HepG2 (cell line): ENCODE measurements at regions of chr20 and their contacts with region 1.

Region 1: DNA sequence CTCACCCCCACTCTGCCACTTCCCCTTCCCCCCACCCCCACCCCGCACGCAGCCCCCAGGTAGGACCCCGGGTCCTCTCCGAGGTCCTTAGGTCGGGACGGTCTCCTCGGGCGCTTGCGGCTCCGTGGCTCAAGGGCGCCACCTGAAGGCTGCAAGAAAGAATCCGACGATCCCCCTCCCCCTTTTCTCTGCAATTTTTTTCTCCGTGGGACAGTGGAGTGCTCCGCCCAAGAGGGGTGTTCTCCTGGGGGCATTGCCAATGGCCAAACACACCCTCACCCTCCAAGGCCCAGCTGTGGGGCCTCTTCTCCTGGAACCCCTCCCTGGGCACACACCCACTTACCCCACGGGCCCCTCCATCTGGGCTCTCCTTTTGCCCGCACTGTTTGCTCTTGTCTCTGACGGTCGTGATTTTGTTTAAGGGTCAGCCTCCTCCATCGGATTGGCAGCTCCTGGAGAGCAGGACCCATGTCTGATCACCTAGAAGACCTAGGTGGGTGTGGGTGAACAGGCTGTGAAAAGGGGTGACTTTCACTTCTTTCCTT is 1.1 kb upstream of the TMEM74B start:
- DNase-seq: peak; percentile 63
- ATAC-seq: peak; percentile 53
- H3K4me3 ChIP-seq: peak overlapping the region; percentile 56 to 75 (median 69)
- H3K27ac ChIP-seq: peak overlapping the region; percentile 1
- H3K4me1 ChIP-seq: peaks cover 60% of the 10 kb centered on the region
- H3K27me3 ChIP-seq: no peaks in the 10 kb centered on the region; a peak in 1 of 5 replicates
- CTCF ChIP-seq: peak; percentile 84
- EP300 ChIP-seq: no peak
- POLR2A ChIP-seq: no peak
- RAD21 ChIP-seq: peak; percentile 78

Region 2: DNA sequence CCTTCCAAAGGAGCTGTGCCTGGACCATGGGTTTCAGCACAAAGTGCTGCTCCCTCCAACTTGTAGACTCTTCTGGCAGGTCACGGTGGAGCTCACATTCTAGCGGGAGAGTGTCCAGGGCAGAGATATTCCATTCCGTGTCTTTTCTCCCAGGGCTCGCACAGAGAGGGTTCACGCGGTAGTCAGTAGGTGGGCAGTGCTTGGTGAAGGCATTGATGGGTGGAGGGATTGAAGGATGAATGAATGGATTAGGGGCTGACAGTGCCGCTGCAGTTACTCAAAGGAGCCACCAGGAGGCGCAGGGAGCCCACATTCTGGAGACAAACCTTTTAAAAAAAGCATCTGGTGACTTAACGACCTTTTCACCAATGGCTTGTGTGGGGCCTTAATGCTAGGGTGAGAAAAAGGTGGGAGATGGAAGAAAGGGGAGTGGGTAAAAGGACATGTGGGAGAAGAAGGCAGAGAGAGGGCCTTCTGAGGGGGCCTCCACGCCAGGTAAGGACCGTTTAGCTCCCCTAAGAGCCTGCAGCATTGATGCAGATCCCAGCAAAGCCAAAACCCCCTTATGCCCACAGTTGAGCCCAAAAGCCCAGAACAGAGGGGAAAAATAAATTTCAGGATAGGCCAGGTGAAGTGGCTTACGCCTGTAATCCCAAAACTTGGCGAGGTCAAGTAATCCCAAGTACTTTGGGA is 369.8 kb before region 1 on chr20:
- CTCF ChIA-PET with region 1: interaction called, 4 read pairs
- POLR2A ChIA-PET with region 1: no interaction called
- in situ Hi-C with region 1: loop called (anchors 10 kb)
- intact Hi-C with region 1: loop called (anchors 10 kb)
- DNase-seq: peak; percentile 70
- ATAC-seq: peak; percentile 68
- H3K4me3 ChIP-seq: no peak overlapping the region
- H3K27ac ChIP-seq: no peak overlapping the region
- H3K4me1 ChIP-seq: no peaks in the 10 kb centered on the region
- H3K27me3 ChIP-seq: no peaks in the 10 kb centered on the region
- CTCF ChIP-seq: peak; percentile 97
- EP300 ChIP-seq: no peak
- POLR2A ChIP-seq: no peak
- RAD21 ChIP-seq: peak; percentile 91

Region 3: DNA sequence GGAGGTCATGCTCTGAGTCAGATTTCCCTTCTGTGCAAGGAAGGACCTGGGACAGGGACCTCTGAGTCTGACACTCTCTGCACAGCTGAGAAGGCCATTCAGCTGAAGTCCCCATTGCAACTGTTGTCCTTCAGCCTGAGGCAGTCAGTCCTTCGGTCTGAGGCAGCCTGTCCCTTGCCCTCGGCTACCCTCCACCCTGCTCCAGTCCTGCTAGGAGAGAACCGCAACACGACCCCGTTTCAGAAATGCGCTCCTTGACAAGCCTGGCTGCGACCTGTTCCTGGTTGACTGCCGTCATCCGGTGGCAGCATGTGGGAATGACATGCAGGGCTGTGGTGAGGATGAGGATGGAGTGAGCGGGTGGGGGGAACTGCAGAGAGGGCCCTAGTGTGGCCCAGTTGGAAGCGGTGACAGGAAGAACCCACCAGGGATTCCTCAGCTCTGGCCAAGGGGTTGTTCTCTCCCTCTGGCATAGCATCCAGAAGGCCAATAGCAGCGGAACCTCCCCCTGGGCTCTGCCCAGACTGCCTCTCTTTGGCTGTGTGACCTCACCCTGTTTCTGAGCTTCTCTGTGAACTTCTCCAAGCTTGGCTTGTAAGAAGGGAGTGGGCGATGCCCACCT is 229.4 kb before region 1 on chr20:
- CTCF ChIA-PET with region 1: no interaction called
- POLR2A ChIA-PET with region 1: no interaction called
- in situ Hi-C with region 1: loop called (anchors 10 kb)
- intact Hi-C with region 1: no loop called
- DNase-seq: peak; percentile 74
- ATAC-seq: peak; percentile 87
- H3K4me3 ChIP-seq: no peak overlapping the region
- H3K27ac ChIP-seq: no peak overlapping the region
- H3K4me1 ChIP-seq: no peaks in the 10 kb centered on the region
- H3K27me3 ChIP-seq: peaks cover 12 to 39% of the 10 kb centered on the region in 2 experiments
- CTCF ChIP-seq: peak; percentile 100
- EP300 ChIP-seq: no peak
- POLR2A ChIP-seq: no peak
- RAD21 ChIP-seq: peak; percentile 99

Region 4: DNA sequence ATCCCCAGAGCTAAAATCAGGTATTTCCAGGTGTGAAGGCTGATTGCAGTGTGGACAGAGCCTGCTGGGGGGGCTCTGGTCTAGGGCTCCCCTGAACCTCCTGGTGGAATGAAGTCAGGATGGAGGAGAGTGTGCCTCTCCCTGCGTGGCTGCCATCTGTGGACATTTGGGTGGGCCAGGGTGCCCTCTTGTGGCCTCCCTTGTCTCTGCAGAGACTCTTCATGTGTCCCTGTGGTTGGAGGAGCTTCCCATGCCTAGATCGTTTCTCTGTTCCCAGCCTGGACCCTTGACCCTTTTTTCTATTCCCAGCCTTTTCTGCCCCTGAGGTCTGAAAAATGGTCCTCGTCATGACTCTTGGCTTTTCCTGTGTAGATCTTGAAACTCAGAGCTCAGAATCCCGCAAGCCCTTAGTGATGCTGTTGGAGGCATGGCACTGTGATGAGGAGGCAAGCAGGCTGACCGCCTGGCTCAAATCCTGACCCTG is 77.4 kb before region 1 on chr20:
- CTCF ChIA-PET with region 1: interaction called, 12 read pairs
- POLR2A ChIA-PET with region 1: no interaction called
- in situ Hi-C with region 1: no loop called
- intact Hi-C with region 1: loop called (anchors 2 kb)
- DNase-seq: peak; percentile 60
- ATAC-seq: peak; percentile 96
- H3K4me3 ChIP-seq: no peak overlapping the region
- H3K27ac ChIP-seq: no peak overlapping the region
- H3K4me1 ChIP-seq: no peaks in the 10 kb centered on the region
- H3K27me3 ChIP-seq: no peaks in the 10 kb centered on the region
- CTCF ChIP-seq: peak; percentile 95
- EP300 ChIP-seq: no peak
- POLR2A ChIP-seq: no peak
- RAD21 ChIP-seq: peak; percentile 75

Region 5: DNA sequence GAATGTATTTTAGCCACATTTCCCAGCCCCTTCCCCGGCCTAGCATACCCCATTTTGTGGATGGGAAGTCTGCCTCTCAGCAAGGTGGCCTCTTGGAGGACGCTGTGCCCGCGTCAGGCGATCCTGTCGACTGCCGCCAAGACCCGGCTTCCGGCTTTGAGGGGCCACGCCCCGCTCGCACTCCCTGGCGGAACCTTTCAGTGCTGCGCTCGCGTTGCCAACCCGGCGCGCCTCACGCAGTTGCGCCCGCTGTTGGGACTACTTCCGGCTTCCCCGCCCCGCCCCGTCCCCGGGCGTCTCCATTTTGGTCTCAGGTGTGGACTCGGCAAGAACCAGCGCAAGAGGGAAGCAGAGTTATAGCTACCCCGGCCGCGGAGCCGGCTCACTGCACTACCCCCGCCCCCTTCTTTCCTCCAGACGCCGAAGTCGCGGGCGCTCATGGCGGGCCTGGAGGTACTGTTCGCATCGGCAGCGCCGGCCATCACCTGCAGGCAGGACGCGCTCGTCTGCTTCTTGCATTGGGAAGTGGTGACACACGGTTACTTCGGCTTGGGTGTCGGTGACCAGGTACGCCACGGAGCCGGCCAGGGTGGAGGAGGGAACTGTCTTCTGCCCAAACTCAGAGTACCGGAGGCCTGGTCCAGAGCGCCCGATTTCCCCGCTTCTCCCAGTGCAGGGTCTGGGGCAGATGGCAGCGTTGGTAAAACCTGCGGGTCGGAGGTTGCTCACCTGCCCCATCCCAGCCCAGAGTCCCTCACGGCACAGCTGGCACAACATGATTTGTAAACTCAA is 67.3 kb before region 1 on chr20 and contains the start of gene PSMF1:
- CTCF ChIA-PET with region 1: no interaction called
- POLR2A ChIA-PET with region 1: no interaction called
- in situ Hi-C with region 1: loop called (anchors 5 kb)
- intact Hi-C with region 1: loop called (anchors 2 kb)
- DNase-seq: peak; percentile 92
- ATAC-seq: peak; percentile 89
- H3K4me3 ChIP-seq: peak within 1 kb of the TSS; percentile 80 to 99 (median 93)
- H3K27ac ChIP-seq: peak within 1 kb of the TSS; percentile 72
- H3K4me1 ChIP-seq: peaks cover 62% of the 10 kb centered on the region
- H3K27me3 ChIP-seq: no peaks in the 10 kb centered on the region; a peak in 1 of 5 replicates
- CTCF ChIP-seq: peak; percentile 63
- EP300 ChIP-seq: peak; percentile 73 to 86
- POLR2A ChIP-seq: peak; percentile 97
- RAD21 ChIP-seq: peak; percentile 77
- total RNA-seq, gene PSMF1: 86.0 and 113 TPM in 2 replicates